AG04449 (cell line): ENCODE measurements at regions of chr3 and their contacts with region 1.

Region 1: GRCh38 chr3:72997421-72997961 is 880 bp downstream of the PPP4R2 start:
- DNase-seq: no peak
- H3K4me3 ChIP-seq: peak overlapping the region; percentile 82
- CTCF ChIP-seq: peak; percentile 42

Region 2: GRCh38 chr3:73007992-73008712 is 10.7 kb after region 1 on chr3:
- CTCF ChIA-PET with region 1: interaction called, 10 read pairs
- POLR2A ChIA-PET with region 1: no interaction called
- DNase-seq: no peak
- H3K4me3 ChIP-seq: no peak overlapping the region
- CTCF ChIP-seq: no peak